HCT116 (cell line): ENCODE measurements at regions of chr9 and their contacts with region 1.

Region 1: DNA sequence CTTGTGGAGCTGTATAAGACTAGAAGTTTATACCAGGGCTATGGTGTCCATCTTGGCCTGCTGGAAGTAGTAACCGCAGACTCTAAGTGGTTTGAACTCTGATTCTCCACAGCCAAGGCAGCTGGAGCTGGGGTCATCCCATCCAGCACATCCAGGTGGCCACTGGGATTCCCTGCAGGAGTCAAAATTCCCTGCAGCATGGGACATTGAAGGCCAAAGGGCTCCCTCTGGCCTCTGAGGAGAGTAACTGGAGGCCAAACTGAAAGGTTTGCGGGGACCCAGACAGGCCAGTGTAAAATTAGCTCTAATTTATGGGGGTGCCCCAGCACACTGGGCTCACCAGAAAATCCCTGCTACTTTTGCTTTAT is 12.2 kb upstream of the PRXL2C start:
- DNase-seq: no peak
- ATAC-seq: peak; percentile 39
- H3K4me3 ChIP-seq: no peak overlapping the region
- H3K27ac ChIP-seq: no peak overlapping the region
- H3K4me1 ChIP-seq: peaks cover 0 to 3% of the 10 kb centered on the region in 2 experiments; a peak in 2 of 4 replicates
- H3K27me3 ChIP-seq: no peaks in the 10 kb centered on the region
- CTCF ChIP-seq: no peak
- POLR2A ChIP-seq: no peak
- RAD21 ChIP-seq: 0 out of 2 replicates have a peak, but pooled peaks have one; percentile 6

Region 2: GRCh38 chr9:96449845-96450612 is 217.3 kb before region 1 on chr9 and contains the start of gene HABP4:
- CTCF ChIA-PET with region 1: no interaction called
- POLR2A ChIA-PET with region 1: no interaction called
- RAD21 ChIA-PET with region 1: no interaction called
- intact Hi-C with region 1: loop called (anchors 5 kb)
- DNase-seq: peak; percentile 76
- ATAC-seq: peak; percentile 94
- H3K4me3 ChIP-seq: peak within 1 kb of the TSS; percentile 66 to 70
- H3K27ac ChIP-seq: peak within 1 kb of the TSS; percentile 73
- H3K4me1 ChIP-seq: peaks cover 4 to 31% of the 10 kb centered on the region in 2 experiments; a peak in 3 of 4 replicates
- H3K27me3 ChIP-seq: no peaks in the 10 kb centered on the region
- CTCF ChIP-seq: no peak
- POLR2A ChIP-seq: no peak
- RAD21 ChIP-seq: no peak
- total RNA-seq, gene HABP4: 21.0 TPM